ENCODE measurements at regions of chr22 and their contacts with region 1.

Region 1: GRCh38 chr22:42549331-42550060 is 4.3 kb upstream of the SERHL2 start:
- DNase-seq: no peak
- ATAC-seq: no peak
- H3K4me3 ChIP-seq: no peak overlapping the region
- H3K27ac ChIP-seq: no peak overlapping the region
- H3K4me1 ChIP-seq: peaks cover 7% of the 10 kb centered on the region; the same call in 2 of the 3 replicates
- CTCF ChIP-seq: no peak
- EP300 ChIP-seq: no peak
- POLR2A ChIP-seq: no peak
- RAD21 ChIP-seq: no peak

Region 2: DNA sequence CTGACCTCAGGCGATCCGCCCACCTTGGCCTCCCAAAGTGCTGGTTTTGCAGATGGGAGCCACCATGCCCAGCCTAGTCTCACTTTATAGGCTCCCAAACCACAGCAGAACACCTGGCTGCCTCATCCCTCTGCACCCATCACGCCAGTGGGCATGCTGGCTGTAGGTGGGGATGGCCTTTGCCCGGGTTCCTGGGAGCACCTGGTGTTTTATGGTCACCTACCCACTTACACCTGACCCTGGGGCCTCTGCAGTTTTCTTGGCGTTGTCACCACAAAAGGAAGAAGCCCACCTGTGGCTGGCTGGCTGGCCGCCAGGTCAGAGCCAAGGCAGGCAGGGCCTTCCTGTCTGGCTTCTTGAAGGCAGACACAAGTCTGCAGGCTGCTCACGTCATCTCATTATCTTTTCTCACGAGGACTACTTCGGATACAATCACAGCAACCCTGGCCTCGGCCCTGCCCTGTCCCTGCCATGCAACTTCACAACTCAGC is 38.0 kb before region 1 on chr22:
- CTCF ChIA-PET with region 1: interaction called, 10 read pairs
- POLR2A ChIA-PET with region 1: no interaction called
- DNase-seq: no peak
- ATAC-seq: no peak
- H3K4me3 ChIP-seq: no peak overlapping the region
- H3K27ac ChIP-seq: no peak overlapping the region
- H3K4me1 ChIP-seq: 0 out of 3 replicates have a peak, but pooled peaks cover 3% of the 10 kb centered on the region
- CTCF ChIP-seq: no peak
- EP300 ChIP-seq: no peak
- POLR2A ChIP-seq: no peak
- RAD21 ChIP-seq: no peak

Region 3: DNA sequence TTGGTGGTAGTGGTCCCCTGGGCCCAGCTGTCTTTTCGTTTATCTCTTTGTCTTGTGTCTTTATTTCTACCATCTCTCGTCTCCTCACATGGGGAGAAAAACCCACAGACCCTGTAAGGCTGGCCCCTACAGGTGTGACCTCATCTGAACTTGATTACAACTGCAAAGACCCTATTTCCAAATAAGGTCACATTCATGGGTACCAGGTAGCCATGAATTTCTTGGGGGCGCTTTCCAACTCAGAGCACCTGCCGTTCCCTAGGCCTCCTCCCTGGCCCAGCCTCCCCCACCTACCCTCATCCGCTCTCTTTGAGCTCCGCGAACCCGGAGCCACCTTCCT is 15.9 kb before region 1 on chr22:
- CTCF ChIA-PET with region 1: interaction called, 33 read pairs
- POLR2A ChIA-PET with region 1: no interaction called
- DNase-seq: no peak
- ATAC-seq: no peak
- H3K4me3 ChIP-seq: no peak overlapping the region
- H3K27ac ChIP-seq: no peak overlapping the region
- H3K4me1 ChIP-seq: peaks cover 4% of the 10 kb centered on the region; the same call in 1 of the 3 replicates
- CTCF ChIP-seq: no peak
- EP300 ChIP-seq: no peak
- POLR2A ChIP-seq: no peak
- RAD21 ChIP-seq: no peak